ENCODE measurements at regions of chr14 and their contacts with region 1.

Region 1: GRCh38 chr14:44912041-44912869 is 49.5 kb downstream of the KLHL28 start:
- DNase-seq: peak; percentile 34
- H3K4me3 ChIP-seq: peak overlapping the region in 1 of 2 experiments; percentile 34; a peak in 2 of 4 replicates
- H3K27ac ChIP-seq: no peak overlapping the region
- H3K4me1 ChIP-seq: no peaks in the 10 kb centered on the region; a peak in 1 of 4 replicates
- H3K27me3 ChIP-seq: no peaks in the 10 kb centered on the region
- CTCF ChIP-seq: no peak
- EP300 ChIP-seq: no peak
- RAD21 ChIP-seq: no peak

Region 2: DNA sequence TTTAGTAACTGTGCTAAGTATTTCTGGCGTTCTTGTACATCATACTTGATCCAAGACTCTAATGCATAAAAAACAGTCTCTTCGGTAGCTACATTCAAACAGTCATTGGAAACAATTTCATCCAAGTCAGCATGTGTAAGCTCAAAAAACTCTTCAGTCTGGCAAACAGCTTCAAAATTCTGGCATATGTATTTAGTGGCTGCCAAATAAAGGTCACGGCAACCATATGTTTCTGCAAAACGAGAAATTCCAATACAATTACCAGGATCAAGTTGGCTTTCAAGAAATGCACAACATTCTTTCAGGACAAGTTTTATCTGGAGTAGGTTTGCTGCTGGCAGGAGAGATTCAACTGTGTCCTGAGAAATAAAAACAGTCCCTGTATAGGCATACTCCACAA is 33.0 kb after region 1 on chr14:
- CTCF ChIA-PET with region 1: no interaction called
- POLR2A ChIA-PET with region 1: no interaction called
- DNase-seq: no peak
- H3K4me3 ChIP-seq: no peak overlapping the region
- H3K27ac ChIP-seq: peak overlapping the region; percentile 39 to 46; a peak in 2 of 4 replicates
- H3K4me1 ChIP-seq: no peaks in the 10 kb centered on the region; a peak in 1 of 4 replicates
- H3K27me3 ChIP-seq: no peaks in the 10 kb centered on the region
- CTCF ChIP-seq: no peak
- EP300 ChIP-seq: peak in 1 of 2 experiments; percentile 42; a peak in 1 of 4 replicates
- RAD21 ChIP-seq: no peak

Region 3: GRCh38 chr14:45267071-45267470 is 354.8 kb after region 1 on chr14:
- CTCF ChIA-PET with region 1: interaction called, 26 read pairs
- POLR2A ChIA-PET with region 1: no interaction called
- DNase-seq: no peak
- H3K4me3 ChIP-seq: no peak overlapping the region
- H3K27ac ChIP-seq: no peak overlapping the region
- H3K4me1 ChIP-seq: no peaks in the 10 kb centered on the region
- H3K27me3 ChIP-seq: no peaks in the 10 kb centered on the region
- CTCF ChIP-seq: no peak
- EP300 ChIP-seq: no peak
- RAD21 ChIP-seq: no peak